OCI-LY7 (cell line): ENCODE measurements at regions of chr1 and their contacts with region 1.

Region 1: GRCh38 chr1:201447911-201448871 is 20.8 kb downstream of the PHLDA3 start:
- DNase-seq: peak; percentile 77
- H3K4me3 ChIP-seq: peak overlapping the region; percentile 23
- H3K27ac ChIP-seq: peak overlapping the region; percentile 28
- H3K4me1 ChIP-seq: peaks cover 43% of the 10 kb centered on the region
- CTCF ChIP-seq: peak; percentile 92

Region 2: DNA sequence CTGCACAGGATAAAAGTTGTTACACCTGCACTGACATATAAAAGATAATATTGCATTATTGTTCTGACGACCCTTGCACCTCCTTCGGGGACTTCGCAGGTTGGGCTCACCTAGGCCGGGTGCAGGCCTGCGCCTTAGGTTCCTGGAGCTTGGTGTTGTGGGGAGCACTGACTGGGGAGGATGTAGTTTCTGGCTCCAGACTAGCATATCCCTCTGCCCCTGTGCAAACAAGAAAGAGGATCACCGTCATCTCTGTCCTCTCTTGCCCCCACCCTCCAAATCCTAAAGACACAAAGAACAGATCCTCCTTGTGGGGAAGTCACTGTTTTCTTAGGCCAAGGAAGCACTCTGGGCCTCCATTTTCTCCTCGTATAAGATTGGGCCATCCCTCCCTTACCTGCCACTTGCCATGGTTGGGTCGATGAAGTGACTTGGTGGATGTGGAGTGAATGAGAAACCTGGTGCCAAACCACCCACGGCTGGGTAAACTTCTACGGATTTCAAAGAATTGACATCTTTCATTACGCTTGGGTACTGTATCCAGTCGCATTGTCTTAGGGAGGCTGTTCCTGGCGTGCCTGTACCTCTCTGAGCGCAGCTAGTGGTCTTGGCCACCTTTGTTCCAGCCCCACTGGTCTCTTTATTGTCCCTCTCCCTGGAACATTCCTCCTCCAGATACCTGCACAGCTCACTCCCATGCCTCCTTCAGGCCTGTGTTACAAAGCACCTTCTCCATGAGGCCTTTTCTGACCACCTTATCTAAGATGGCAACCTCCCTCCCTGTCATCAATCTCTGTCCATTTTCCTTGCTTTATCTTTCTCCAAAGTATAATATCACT is 199.3 kb before region 1 on chr1:
- CTCF ChIA-PET with region 1: no interaction called
- POLR2A ChIA-PET with region 1: no interaction called
- intact Hi-C with region 1: no loop called
- DNase-seq: no peak
- H3K4me3 ChIP-seq: no peak overlapping the region
- H3K27ac ChIP-seq: no peak overlapping the region
- H3K4me1 ChIP-seq: no peaks in the 10 kb centered on the region
- CTCF ChIP-seq: no peak

Region 3: DNA sequence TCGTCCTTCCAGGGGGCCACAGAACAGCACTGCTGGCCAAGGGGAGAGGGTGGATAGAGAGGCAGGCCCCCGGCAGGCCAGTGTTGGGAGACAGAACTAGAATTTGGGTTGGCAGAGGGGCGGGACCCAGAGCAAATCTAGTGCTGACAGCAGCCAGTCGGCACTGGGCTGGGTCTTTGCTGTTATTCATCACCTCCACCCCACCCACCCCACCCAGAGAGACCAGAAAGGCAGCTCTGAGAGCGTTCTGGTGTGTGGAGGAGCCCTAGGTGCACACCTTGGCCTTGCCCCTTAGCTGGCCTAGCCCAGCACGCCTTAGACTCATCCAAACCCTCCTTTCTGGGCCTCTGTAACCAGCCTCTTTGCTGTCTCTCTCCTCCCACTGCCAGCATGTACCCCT is 171.3 kb before region 1 on chr1:
- CTCF ChIA-PET with region 1: interaction called, 12 read pairs
- POLR2A ChIA-PET with region 1: no interaction called
- intact Hi-C with region 1: no loop called
- DNase-seq: no peak
- H3K4me3 ChIP-seq: no peak overlapping the region
- H3K27ac ChIP-seq: no peak overlapping the region
- H3K4me1 ChIP-seq: no peaks in the 10 kb centered on the region
- CTCF ChIP-seq: no peak

Region 4: GRCh38 chr1:201459805-201460204 is 11.6 kb after region 1 on chr1:
- CTCF ChIA-PET with region 1: interaction called, 13 read pairs
- POLR2A ChIA-PET with region 1: interaction called, 4 read pairs
- intact Hi-C with region 1: no loop called
- DNase-seq: no peak
- H3K4me3 ChIP-seq: no peak overlapping the region
- H3K27ac ChIP-seq: no peak overlapping the region
- H3K4me1 ChIP-seq: peaks cover 20% of the 10 kb centered on the region
- CTCF ChIP-seq: no peak

Region 5: DNA sequence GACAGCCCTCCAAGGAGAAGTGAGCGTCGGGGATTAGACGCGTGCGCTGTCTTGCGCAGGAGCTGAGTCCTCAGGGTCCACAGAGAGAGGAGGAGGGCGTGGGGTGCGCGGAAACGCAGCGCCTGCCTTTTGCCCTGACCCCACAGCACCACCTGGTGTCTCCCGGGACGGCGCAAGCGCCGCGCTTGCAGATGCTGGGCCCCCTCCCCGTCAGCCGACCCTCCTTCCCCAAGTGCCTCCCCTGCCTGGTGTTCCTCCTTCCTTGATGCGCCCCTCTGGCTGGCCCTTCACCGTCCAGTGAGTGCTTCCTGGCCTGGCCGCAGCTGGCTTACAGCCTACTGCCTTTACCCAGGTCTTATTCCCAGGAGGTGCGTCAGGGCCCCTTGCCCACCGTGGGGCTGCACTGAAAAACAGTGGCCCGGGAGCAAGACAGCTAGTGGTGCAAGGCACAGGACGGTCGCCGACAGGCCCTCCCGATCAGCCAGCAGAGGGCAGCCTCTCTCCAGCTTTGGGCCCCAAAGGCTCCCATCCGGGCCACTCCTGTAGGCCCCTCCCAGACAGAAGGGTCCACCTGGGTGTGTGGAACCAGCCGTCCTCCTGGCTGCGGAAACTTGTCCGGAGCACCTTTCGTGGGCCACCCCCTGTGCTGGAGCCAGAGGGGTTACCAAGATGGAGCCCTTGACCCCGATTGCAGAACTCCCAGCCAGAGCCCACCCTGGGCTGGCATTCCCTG is 33.7 kb after region 1 on chr1:
- CTCF ChIA-PET with region 1: interaction called, 13 read pairs
- POLR2A ChIA-PET with region 1: interaction called, 6 read pairs
- intact Hi-C with region 1: loop called (anchors 1 kb)
- DNase-seq: peak; percentile 88
- H3K4me3 ChIP-seq: peak overlapping the region; percentile 55
- H3K27ac ChIP-seq: no peak overlapping the region
- H3K4me1 ChIP-seq: peaks cover 28% of the 10 kb centered on the region
- CTCF ChIP-seq: peak; percentile 96

Region 6: GRCh38 chr1:201676197-201676596 is 228.0 kb after region 1 on chr1:
- CTCF ChIA-PET with region 1: no interaction called
- POLR2A ChIA-PET with region 1: no interaction called
- intact Hi-C with region 1: no loop called
- DNase-seq: no peak
- H3K4me3 ChIP-seq: no peak overlapping the region
- H3K27ac ChIP-seq: no peak overlapping the region
- H3K4me1 ChIP-seq: no peaks in the 10 kb centered on the region
- CTCF ChIP-seq: no peak

Region 7: DNA sequence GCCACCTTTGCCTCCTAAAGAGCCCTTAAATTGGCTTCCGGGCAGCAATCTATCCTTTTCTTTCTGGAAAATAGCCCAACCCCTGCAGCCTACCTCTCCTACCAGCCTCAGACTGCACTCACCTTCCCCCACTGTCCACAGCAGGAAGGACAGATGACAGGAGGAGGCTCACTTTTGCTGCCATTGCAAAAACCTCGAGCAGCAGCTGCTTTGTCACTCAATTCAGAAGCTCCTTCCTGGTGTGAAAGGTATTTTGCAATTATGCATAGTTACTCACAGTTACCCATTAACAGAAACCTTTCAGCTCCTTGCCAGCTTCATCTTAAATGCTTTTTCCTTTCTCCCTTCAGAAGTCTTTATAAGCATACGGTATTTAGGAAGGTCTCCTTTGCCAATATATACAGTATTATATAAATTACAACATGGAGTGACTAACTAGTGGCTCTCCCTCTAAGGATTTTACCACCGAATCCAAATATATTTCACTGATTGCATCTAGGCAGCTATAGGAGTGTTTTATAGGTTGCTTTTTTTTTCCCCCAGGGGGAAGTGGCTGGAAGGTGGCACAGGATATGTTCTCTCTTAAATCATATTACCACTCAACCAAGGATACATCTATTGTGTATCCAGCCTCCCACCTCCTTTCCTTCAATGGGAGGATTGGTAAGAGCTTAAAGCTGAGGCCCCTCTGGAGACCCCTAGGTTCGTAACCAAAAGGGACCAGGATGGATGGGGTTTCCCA is 238.7 kb after region 1 on chr1:
- CTCF ChIA-PET with region 1: no interaction called
- POLR2A ChIA-PET with region 1: no interaction called
- intact Hi-C with region 1: no loop called
- DNase-seq: no peak
- H3K4me3 ChIP-seq: no peak overlapping the region
- H3K27ac ChIP-seq: no peak overlapping the region
- H3K4me1 ChIP-seq: no peaks in the 10 kb centered on the region
- CTCF ChIP-seq: no peak